ENCODE measurements at regions of chr16 and their contacts with region 1.

Region 1: GRCh38 chr16:50368410-50369132 is at the start of gene BRD7:
- DNase-seq: peak; percentile 60 to 77
- H3K4me3 ChIP-seq: peak within 1 kb of the TSS; percentile 58
- H3K4me1 ChIP-seq: peaks cover 10% of the 10 kb centered on the region; the same call in 1 of the 2 replicates
- H3K27me3 ChIP-seq: no peaks in the 10 kb centered on the region

Region 2: DNA sequence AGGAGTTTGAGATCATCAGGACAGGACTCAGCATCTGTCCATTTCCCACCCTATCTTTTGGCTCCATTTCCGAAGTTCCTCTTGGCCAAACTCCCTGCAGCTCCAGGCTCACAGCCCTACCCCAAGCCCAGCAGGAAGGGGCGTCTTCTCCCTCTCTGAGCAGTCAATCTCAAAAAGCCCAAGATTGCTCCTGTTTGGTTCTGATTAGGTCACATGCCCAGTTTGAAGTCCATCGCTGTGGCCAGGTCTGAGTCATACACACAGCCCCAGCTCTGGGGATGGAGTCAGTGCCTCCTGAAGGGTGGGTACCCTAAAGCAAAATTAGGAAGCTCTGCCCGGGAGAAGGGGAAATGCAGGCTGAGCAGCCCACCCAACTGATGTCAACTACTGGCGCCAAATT is 288.7 kb after region 1 on chr16:
- in situ Hi-C with region 1: loop called (anchors 10 kb)
- DNase-seq: no peak
- H3K4me3 ChIP-seq: no peak overlapping the region
- H3K4me1 ChIP-seq: no peaks in the 10 kb centered on the region
- H3K27me3 ChIP-seq: no peaks in the 10 kb centered on the region

Region 3: GRCh38 chr16:50806099-50807062 is 437.8 kb after region 1 on chr16:
- in situ Hi-C with region 1: loop called (anchors 25 kb)
- DNase-seq: peak; percentile 83 to 88
- H3K4me3 ChIP-seq: peak overlapping the region; percentile 21
- H3K4me1 ChIP-seq: peaks cover 3% of the 10 kb centered on the region
- H3K27me3 ChIP-seq: no peaks in the 10 kb centered on the region